PC-9 (cell line): ENCODE measurements at regions of chr15 and their contacts with region 1.

Region 1: DNA sequence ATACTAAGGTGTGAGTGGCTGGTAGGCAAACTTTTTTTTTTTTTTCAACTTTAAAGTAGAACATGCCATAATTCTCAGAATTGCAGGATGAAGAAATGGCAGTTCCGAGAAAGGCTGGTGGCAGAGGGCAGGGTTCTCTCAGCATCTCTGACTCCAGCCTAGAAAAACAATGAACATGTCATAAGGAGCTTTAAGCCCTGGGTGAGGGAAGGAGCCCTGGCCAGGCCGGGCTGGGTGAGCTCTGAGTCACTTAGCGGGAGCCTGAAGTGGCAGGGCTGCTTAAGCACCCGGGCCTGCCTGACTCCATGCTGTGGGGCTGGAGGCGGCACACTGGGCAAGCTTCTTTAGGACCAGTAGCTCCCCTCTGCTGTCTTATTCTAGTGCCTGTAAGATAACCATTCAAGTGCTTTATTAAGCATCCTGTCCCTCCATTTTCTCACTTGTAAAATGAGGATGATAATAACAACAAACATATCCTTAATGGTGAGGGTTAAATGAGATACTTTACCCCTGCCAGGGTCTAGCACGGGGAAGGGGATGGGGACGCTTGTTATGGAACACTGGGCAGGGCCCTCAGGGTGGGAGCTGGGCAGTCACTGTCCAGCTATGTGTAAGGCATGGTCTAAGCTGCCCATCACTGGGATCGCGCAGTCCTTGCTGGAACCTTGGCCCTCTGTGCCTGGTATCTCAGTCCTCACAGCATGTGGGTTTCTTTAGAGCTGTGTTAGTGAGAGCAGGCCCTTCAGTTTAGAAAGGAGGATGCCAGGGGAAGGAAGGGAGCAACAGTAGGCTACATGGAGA is 18.4 kb downstream of the SMAD6 start:
- DNase-seq: peak; percentile 55 to 74
- H3K4me3 ChIP-seq: no peak overlapping the region
- H3K27ac ChIP-seq: peak overlapping the region; percentile 56
- H3K4me1 ChIP-seq: peaks cover 50% of the 10 kb centered on the region
- H3K27me3 ChIP-seq: no peaks in the 10 kb centered on the region
- CTCF ChIP-seq: no peak

Region 2: GRCh38 chr15:66743703-66744536 is 23.5 kb after region 1 on chr15:
- CTCF ChIA-PET with region 1: no interaction called
- POLR2A ChIA-PET with region 1: interaction called, 25 read pairs
- intact Hi-C with region 1: no loop called
- DNase-seq: no peak
- H3K4me3 ChIP-seq: no peak overlapping the region
- H3K27ac ChIP-seq: no peak overlapping the region
- H3K4me1 ChIP-seq: peaks cover 23% of the 10 kb centered on the region
- H3K27me3 ChIP-seq: no peaks in the 10 kb centered on the region
- CTCF ChIP-seq: no peak

Region 3: DNA sequence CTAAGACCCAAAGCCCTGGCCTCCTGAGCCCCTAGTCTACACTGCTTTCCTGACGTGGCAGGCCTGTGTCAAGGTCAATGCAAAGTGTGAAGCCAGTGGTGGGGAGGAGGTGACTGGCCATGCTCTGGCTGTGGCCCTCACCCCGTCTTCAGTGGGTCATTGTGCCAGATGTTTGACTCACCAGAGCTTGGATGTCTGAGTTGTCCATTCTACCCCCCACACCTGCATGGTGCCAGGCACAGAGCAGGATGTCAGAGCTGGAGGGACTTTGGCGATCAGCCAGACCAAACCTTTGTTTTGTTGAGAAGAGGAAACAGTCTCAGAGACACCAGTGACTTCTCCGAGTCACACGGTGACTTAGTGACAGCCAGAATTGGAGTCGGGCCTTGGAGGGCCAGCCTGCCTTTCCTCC is 31.1 kb after region 1 on chr15:
- CTCF ChIA-PET with region 1: interaction called, 3 read pairs
- POLR2A ChIA-PET with region 1: interaction called, 28 read pairs
- intact Hi-C with region 1: no loop called
- DNase-seq: peak; percentile 66 to 80
- H3K4me3 ChIP-seq: no peak overlapping the region
- H3K27ac ChIP-seq: peak overlapping the region; percentile 47; the same call in 1 of the 2 replicates
- H3K4me1 ChIP-seq: peaks cover 58% of the 10 kb centered on the region
- H3K27me3 ChIP-seq: no peaks in the 10 kb centered on the region
- CTCF ChIP-seq: no peak

Region 4: DNA sequence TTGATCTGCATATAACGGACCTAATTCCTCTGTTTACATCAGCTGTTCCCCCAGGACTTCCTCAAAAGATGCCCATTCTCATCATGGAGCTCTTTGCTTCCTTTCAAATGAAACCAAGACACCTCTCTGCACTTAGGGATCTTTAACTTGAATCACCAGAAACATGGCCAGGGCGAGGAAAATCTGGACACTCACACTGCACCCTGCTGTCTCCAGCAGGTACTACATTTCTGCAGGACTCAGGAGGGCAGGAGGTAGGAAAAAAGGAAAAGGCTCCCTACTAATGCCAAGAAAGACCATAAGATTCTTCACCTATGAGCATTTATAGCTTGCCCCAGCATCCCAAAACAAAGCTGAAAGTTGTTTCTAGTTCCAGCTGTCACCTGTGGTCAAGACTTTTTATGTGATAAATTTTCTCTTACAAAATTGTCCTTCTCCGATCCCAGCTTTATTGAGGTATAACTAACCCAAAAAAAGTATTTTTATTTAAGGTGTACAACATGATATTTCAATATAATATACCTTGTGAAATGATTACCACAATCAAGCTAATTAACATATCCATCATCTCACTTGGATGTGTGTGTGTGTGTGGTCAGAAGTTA is 713.2 kb after region 1 on chr15:
- CTCF ChIA-PET with region 1: interaction called, 11 read pairs
- POLR2A ChIA-PET with region 1: no interaction called
- intact Hi-C with region 1: no loop called
- DNase-seq: peak in 1 of 2 experiments; percentile 29
- H3K4me3 ChIP-seq: no peak overlapping the region
- H3K27ac ChIP-seq: no peak overlapping the region
- H3K4me1 ChIP-seq: no peaks in the 10 kb centered on the region; the same call in 1 of the 2 replicates
- H3K27me3 ChIP-seq: no peaks in the 10 kb centered on the region
- CTCF ChIP-seq: peak; percentile 76